HEK293T (cell line): ENCODE measurements at regions of chr12 and their contacts with region 1.

Region 1: GRCh38 chr12:81274637-81275529 is 197.0 kb downstream of the ACSS3 start:
- DNase-seq: no peak

Region 2: GRCh38 chr12:80593766-80594165 is 681.1 kb before region 1 on chr12:
- CTCF ChIA-PET with region 1: interaction called, 11 read pairs
- POLR2A ChIA-PET with region 1: no interaction called
- DNase-seq: no peak

Region 3: GRCh38 chr12:81167694-81168093 is 107.2 kb before region 1 on chr12:
- CTCF ChIA-PET with region 1: no interaction called
- POLR2A ChIA-PET with region 1: no interaction called
- DNase-seq: no peak

Region 4: GRCh38 chr12:81294325-81295190 is 19.7 kb after region 1 on chr12:
- CTCF ChIA-PET with region 1: no interaction called
- POLR2A ChIA-PET with region 1: no interaction called
- DNase-seq: no peak